HCT116 (cell line): ENCODE measurements at regions of chr7 and their contacts with region 1.

Region 1: DNA sequence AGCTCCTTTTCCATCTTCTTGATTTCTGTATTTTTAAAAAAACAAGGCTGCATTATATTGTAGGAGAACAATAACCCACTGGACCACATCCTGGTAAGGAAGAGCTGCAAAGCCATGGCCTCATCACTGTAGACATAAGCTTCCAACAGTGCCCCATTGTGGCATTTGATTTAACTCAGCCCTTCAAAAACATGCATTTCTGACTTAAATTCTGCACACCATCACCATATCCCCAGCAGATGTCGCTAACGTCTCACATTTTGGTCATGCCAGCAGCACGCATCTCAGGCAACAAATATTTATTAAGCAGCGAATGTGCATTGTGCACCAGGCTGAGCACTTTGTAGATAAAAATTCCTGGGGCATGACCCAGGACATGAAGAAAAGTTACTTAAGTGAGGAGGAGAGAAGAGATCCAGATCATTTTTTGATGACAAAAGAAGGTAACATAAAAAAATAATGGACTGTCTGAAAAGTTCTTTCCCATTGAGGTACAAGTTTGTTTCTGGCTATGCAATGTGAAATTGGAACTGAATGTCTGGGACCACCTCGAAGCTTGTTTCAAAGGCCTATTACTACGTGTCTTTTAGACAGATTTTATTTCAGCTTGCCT is 164.6 kb upstream of the CDCA7L start:
- DNase-seq: peak; percentile 74
- ATAC-seq: peak; percentile 88
- H3K4me3 ChIP-seq: no peak overlapping the region
- H3K27ac ChIP-seq: no peak overlapping the region
- H3K4me1 ChIP-seq: no peaks in the 10 kb centered on the region
- H3K27me3 ChIP-seq: no peaks in the 10 kb centered on the region
- CTCF ChIP-seq: peak; percentile 63 to 97 (median 85)
- POLR2A ChIP-seq: no peak
- RAD21 ChIP-seq: peak; percentile 98

Region 2: DNA sequence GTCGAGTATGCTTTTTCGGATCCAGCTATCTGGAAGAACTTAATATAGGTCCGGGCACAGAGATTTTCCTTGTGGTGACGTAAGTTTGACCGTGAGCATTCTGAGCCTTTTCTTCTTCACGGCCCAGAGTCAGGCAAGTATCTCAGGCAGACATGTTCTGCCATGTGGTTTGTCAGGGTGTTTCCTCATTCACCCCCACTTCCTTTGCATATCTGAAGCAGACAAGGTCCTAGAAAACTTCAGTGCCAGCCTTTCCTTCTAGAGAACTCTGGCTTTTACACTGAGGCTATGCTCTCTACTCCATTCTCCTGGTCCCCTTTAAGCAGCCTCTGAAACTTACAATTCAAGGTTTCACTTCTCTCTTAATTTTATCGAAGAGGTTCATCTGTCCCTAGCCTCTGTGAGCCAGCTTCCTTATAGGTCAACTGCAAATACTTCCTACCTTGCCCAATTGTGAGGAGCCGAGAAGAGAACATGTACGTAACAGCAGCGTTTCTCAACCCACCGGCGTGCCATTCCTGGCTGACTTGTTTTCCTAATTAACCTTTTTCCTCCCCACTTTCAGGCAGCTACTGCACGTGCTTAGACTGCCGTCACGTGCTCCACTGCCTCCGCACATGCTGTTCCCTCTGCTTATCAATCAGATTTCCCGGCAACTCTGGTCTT is 211.9 kb before region 1 on chr7:
- CTCF ChIA-PET with region 1: no interaction called
- POLR2A ChIA-PET with region 1: no interaction called
- RAD21 ChIA-PET with region 1: no interaction called
- intact Hi-C with region 1: no loop called
- DNase-seq: no peak
- ATAC-seq: no peak
- H3K4me3 ChIP-seq: no peak overlapping the region
- H3K27ac ChIP-seq: no peak overlapping the region
- H3K4me1 ChIP-seq: peaks cover 4 to 11% of the 10 kb centered on the region in 2 experiments; a peak in 2 of 4 replicates
- H3K27me3 ChIP-seq: no peaks in the 10 kb centered on the region
- CTCF ChIP-seq: no peak
- POLR2A ChIP-seq: no peak
- RAD21 ChIP-seq: no peak

Region 3: GRCh38 chr7:22295402-22296264 is 185.3 kb after region 1 on chr7:
- CTCF ChIA-PET with region 1: no interaction called
- POLR2A ChIA-PET with region 1: no interaction called
- RAD21 ChIA-PET with region 1: no interaction called
- intact Hi-C with region 1: loop called (anchors 5 kb)
- DNase-seq: no peak
- ATAC-seq: no peak
- H3K4me3 ChIP-seq: no peak overlapping the region
- H3K27ac ChIP-seq: no peak overlapping the region
- H3K4me1 ChIP-seq: no peaks in the 10 kb centered on the region
- H3K27me3 ChIP-seq: no peaks in the 10 kb centered on the region
- CTCF ChIP-seq: no peak
- POLR2A ChIP-seq: no peak
- RAD21 ChIP-seq: no peak

Region 4: DNA sequence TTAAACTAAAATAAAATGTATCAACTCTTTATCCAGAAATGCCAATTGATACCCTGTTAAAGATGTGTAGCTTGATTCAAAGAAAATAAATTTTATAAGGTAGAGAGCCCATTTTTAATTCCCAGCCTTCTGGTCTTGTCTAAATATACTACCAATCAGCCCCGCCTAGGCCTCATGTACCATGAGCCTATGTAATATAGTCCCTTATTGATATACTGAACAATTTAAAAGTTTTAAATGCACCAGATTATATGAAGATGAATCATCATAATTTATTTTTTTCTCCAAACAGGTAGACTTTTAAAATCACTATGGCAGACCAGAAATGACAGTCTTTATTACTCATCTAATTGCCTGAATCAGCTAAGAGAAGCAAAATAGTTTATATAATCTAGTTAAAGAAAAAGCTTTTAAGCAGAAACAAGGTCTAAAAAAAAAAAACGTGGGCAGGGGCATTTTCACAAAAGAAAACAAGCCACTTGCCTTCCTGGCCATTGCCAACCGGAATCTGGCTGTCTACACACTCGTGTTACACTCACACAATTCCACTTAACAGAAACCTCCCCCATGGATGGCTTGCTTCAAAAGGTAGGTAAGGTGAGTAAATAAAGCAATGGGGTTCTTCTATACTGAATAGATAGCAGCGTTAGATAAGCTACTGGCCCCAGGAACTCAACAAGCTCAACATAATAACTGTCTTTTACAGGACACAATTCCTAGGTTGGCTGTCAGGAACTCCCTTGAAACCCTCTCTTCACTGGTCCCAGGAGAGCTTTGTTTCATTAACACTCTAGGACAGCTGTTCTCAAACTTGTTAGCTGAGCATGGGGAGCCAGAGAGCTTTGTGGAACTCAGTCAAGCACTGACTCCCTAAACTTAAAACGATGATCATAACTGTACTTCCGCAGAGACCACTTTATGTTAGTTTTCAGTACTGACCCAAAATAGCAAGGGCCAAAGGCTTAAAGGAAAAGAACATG is 209.4 kb after region 1 on chr7:
- CTCF ChIA-PET with region 1: no interaction called
- POLR2A ChIA-PET with region 1: no interaction called
- RAD21 ChIA-PET with region 1: no interaction called
- intact Hi-C with region 1: no loop called
- DNase-seq: no peak
- ATAC-seq: no peak
- H3K4me3 ChIP-seq: no peak overlapping the region
- H3K27ac ChIP-seq: no peak overlapping the region
- H3K4me1 ChIP-seq: 0 out of 4 replicates have a peak, but pooled peaks cover 0 to 3% of the 10 kb centered on the region in 2 experiments
- H3K27me3 ChIP-seq: no peaks in the 10 kb centered on the region
- CTCF ChIP-seq: no peak
- POLR2A ChIP-seq: no peak
- RAD21 ChIP-seq: no peak

Region 5: GRCh38 chr7:22452142-22452959 is 342.0 kb after region 1 on chr7:
- CTCF ChIA-PET with region 1: interaction called, 7 read pairs
- POLR2A ChIA-PET with region 1: no interaction called
- RAD21 ChIA-PET with region 1: no interaction called
- intact Hi-C with region 1: loop called (anchors 1 kb)
- DNase-seq: peak; percentile 42
- ATAC-seq: peak; percentile 98
- H3K4me3 ChIP-seq: peak overlapping the region; percentile 38 to 49
- H3K27ac ChIP-seq: no peak overlapping the region
- H3K4me1 ChIP-seq: peaks cover 0 to 9% of the 10 kb centered on the region in 2 experiments; a peak in 1 of 4 replicates
- H3K27me3 ChIP-seq: peaks cover 7% of the 10 kb centered on the region; the same call in 1 of the 2 replicates
- CTCF ChIP-seq: peak; percentile 52 to 95 (median 95); a peak in 5 of 6 replicates
- POLR2A ChIP-seq: no peak
- RAD21 ChIP-seq: peak; percentile 76

Region 6: DNA sequence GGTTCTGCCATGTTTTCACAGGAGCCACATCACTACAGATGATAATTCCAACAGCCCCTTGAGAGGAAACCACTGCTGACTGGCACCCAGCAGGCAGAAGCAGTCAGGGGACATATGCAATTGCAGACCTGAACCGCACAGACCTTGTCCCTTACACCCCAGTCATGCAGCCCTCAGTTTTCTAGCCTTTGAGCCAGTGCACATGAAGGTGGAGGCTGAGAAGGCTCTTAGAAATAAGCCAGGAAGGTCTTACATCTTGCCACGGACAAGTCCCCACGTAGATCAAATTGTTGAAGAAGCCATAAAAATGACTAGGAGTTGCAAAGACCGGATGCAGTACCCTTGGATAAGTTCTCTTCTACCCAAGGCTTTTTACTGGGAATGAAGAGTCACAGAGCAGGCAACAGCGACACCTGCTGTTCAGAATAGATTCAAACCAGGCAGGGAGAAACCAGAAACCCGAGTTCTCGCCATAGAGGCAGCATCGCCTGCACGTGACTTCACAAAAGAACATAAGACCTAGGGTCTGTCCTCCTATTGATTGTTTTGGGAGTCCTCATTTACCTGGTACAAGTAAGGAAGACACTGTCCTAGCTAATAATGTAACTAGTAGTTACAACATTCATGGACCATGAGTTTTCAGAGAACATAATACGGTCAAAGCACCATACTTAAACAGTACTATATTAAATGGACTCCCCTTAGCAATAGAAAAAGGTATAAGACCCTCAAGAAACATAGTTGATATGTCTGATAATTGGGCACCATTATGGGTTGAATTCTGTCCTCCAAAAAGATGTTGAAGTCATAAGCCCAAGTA is 378.5 kb after region 1 on chr7:
- CTCF ChIA-PET with region 1: interaction called, 20 read pairs
- POLR2A ChIA-PET with region 1: no interaction called
- RAD21 ChIA-PET with region 1: no interaction called
- intact Hi-C with region 1: loop called (anchors 1 kb)
- DNase-seq: peak; percentile 54
- ATAC-seq: peak; percentile 93
- H3K4me3 ChIP-seq: no peak overlapping the region
- H3K27ac ChIP-seq: no peak overlapping the region
- H3K4me1 ChIP-seq: no peaks in the 10 kb centered on the region
- H3K27me3 ChIP-seq: no peaks in the 10 kb centered on the region
- CTCF ChIP-seq: peak; percentile 80 to 94 (median 91)
- POLR2A ChIP-seq: no peak
- RAD21 ChIP-seq: peak; percentile 98

Region 7: GRCh38 chr7:22499044-22499443 is 388.7 kb after region 1 on chr7:
- CTCF ChIA-PET with region 1: interaction called, 9 read pairs
- POLR2A ChIA-PET with region 1: no interaction called
- RAD21 ChIA-PET with region 1: no interaction called
- intact Hi-C with region 1: loop called (anchors 1 kb)
- DNase-seq: no peak
- ATAC-seq: no peak
- H3K4me3 ChIP-seq: no peak overlapping the region
- H3K27ac ChIP-seq: no peak overlapping the region
- H3K4me1 ChIP-seq: peaks cover 0 to 3% of the 10 kb centered on the region in 2 experiments; a peak in 1 of 4 replicates
- H3K27me3 ChIP-seq: no peaks in the 10 kb centered on the region
- CTCF ChIP-seq: no peak
- POLR2A ChIP-seq: no peak
- RAD21 ChIP-seq: no peak

Region 8: DNA sequence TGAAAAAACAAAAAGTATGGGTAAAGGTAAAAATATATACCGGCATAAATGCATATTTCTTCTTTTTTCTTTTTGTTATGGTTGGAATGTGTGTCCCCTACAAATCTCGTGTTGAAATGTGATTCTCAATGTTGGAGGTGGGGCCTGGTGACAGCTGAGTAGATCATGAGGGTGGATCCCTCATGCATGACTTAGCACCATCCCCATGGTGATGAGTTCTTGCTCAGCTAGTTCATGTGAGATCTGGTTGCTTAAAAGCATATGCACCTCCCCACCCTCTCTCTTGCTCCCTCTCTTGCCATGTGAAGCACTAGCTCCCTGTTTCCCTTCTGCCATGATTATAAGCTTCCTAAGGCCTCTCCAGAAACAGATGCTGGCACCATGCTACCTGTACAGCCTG is 810.3 kb after region 1 on chr7:
- CTCF ChIA-PET with region 1: no interaction called
- POLR2A ChIA-PET with region 1: no interaction called
- RAD21 ChIA-PET with region 1: no interaction called
- intact Hi-C with region 1: no loop called
- DNase-seq: no peak
- ATAC-seq: no peak
- H3K4me3 ChIP-seq: no peak overlapping the region
- H3K27ac ChIP-seq: no peak overlapping the region
- H3K4me1 ChIP-seq: no peaks in the 10 kb centered on the region
- H3K27me3 ChIP-seq: no peaks in the 10 kb centered on the region
- CTCF ChIP-seq: no peak
- POLR2A ChIP-seq: no peak
- RAD21 ChIP-seq: no peak

Region 9: DNA sequence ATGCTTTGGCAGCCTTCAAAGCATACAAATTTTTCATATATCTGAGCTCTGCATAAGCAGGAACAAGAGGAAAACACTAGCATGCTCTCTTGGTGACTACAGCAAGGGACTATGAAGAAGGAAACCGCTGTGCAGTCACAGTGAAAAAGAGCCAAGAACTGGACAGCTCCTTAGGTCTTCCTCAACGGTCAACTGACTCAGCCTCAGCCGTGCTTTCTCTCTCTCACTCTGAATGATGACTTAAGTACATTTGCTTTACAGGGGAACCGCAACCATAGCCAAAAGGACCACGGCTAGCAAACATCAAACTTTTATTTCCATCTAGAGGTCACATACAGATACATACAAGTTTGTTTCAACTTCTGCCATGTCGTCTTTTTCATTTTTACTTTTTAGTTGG is 833.7 kb after region 1 on chr7:
- CTCF ChIA-PET with region 1: no interaction called
- POLR2A ChIA-PET with region 1: no interaction called
- RAD21 ChIA-PET with region 1: no interaction called
- intact Hi-C with region 1: no loop called
- DNase-seq: no peak
- ATAC-seq: no peak
- H3K4me3 ChIP-seq: no peak overlapping the region
- H3K27ac ChIP-seq: no peak overlapping the region
- H3K4me1 ChIP-seq: no peaks in the 10 kb centered on the region
- H3K27me3 ChIP-seq: no peaks in the 10 kb centered on the region
- CTCF ChIP-seq: no peak
- POLR2A ChIP-seq: no peak
- RAD21 ChIP-seq: no peak